ENCODE measurements at regions of chr11 and their contacts with region 1.

Region 1: DNA sequence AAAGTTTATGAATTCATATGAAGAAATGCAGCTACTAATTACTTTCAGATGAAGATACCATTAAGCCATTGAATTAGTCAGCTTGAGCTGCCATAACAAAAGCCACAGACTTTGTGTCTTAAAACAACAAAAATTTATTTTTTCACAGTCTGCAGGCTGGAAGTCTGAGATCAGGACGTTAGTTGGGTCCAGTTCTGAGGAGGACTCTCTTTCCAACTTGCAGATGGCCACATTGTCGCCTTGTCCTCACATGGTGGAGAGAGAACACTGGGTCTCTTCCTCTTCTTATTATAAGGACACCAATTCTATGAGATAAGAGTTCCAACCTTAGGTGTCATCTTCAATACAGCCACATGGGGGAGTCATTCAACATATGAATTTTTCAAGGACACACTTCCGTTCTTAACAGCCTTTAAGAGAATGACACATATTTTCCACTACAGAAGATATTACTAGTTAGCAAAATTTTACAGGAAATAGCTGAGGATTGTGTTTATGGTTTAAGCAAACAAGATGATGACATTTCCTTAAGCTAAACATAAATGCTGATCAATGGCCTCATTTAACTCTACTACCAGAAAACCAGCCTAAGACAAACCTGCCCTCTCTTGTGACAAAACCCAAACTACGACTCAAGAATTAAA is 56.0 kb downstream of the DCUN1D5 start:
- DNase-seq: peak in 6 of 9 experiments; percentile 10 to 80 (median 30)
- ATAC-seq: peak; percentile 93
- H3K4me3 ChIP-seq: no peak overlapping the region
- H3K4me3 Mint-ChIP-seq: no peak overlapping the region
- H3K27ac ChIP-seq: peak overlapping the region in 1 of 2 experiments; percentile 23
- H3K27ac Mint-ChIP-seq: peak overlapping the region; percentile 20
- H3K4me1 ChIP-seq: peaks cover 3% of the 10 kb centered on the region
- H3K4me1 Mint-ChIP-seq: peaks cover 6% of the 10 kb centered on the region
- H3K27me3 ChIP-seq: no peaks in the 10 kb centered on the region
- H3K27me3 Mint-ChIP-seq: no peaks in the 10 kb centered on the region
- CTCF ChIP-seq: peak; percentile 75

Region 2: DNA sequence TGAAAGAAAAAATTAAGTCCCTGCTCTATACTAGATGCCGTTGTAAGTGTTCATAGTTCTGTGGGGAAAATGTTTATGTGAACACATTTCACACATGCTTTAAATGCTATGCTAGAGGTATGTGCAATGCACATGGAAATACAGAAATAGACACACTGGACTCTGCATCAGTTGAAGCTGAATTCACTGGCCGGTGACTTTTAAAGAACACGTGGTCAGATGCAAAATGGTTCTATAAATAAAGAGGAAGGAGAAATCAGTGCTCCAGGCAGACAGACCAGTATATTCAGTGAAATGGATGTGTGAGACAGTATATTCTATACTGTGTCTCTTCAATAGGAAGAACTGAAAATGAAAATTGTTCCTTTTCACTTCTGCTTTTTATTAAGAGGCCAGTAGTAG is 1482.0 kb before region 1 on chr11:
- CTCF ChIA-PET with region 1: no interaction called
- POLR2A ChIA-PET with region 1: no interaction called
- intact Hi-C with region 1: no loop called
- DNase-seq: no peak
- ATAC-seq: no peak
- H3K4me3 ChIP-seq: no peak overlapping the region
- H3K4me3 Mint-ChIP-seq: no peak overlapping the region
- H3K27ac ChIP-seq: no peak overlapping the region
- H3K27ac Mint-ChIP-seq: no peak overlapping the region
- H3K4me1 ChIP-seq: no peaks in the 10 kb centered on the region
- H3K4me1 Mint-ChIP-seq: no peaks in the 10 kb centered on the region
- H3K27me3 ChIP-seq: no peaks in the 10 kb centered on the region
- H3K27me3 Mint-ChIP-seq: no peaks in the 10 kb centered on the region
- CTCF ChIP-seq: no peak

Region 3: GRCh38 chr11:103055221-103055890 is 19.4 kb after region 1 on chr11:
- CTCF ChIA-PET with region 1: interaction called, 5 read pairs
- POLR2A ChIA-PET with region 1: no interaction called
- intact Hi-C with region 1: loop called (anchors 1 to 2 kb)
- DNase-seq: peak in 2 of 9 experiments; percentile 32 to 51
- ATAC-seq: peak; percentile 46
- H3K4me3 ChIP-seq: no peak overlapping the region
- H3K4me3 Mint-ChIP-seq: no peak overlapping the region
- H3K27ac ChIP-seq: no peak overlapping the region
- H3K27ac Mint-ChIP-seq: no peak overlapping the region
- H3K4me1 ChIP-seq: no peaks in the 10 kb centered on the region
- H3K4me1 Mint-ChIP-seq: no peaks in the 10 kb centered on the region
- H3K27me3 ChIP-seq: no peaks in the 10 kb centered on the region
- H3K27me3 Mint-ChIP-seq: no peaks in the 10 kb centered on the region
- CTCF ChIP-seq: peak; percentile 50

Region 4: GRCh38 chr11:103091801-103092524 is 56.0 kb after region 1 on chr11 and contains the start of gene DCUN1D5:
- CTCF ChIA-PET with region 1: interaction called, 3 read pairs
- POLR2A ChIA-PET with region 1: no interaction called
- intact Hi-C with region 1: loop called in 1 of 2 experiments (anchors 5 kb)
- DNase-seq: peak; percentile 88 to 97 (median 95)
- ATAC-seq: peak; percentile 94
- H3K4me3 ChIP-seq: peak within 1 kb of the TSS; percentile 84 to 91
- H3K4me3 Mint-ChIP-seq: peak within 1 kb of the TSS; percentile 84
- H3K27ac ChIP-seq: peak within 1 kb of the TSS; percentile 81 to 86
- H3K27ac Mint-ChIP-seq: peak within 1 kb of the TSS; percentile 95
- H3K4me1 ChIP-seq: peaks cover 25% of the 10 kb centered on the region
- H3K4me1 Mint-ChIP-seq: peaks cover 30% of the 10 kb centered on the region
- H3K27me3 ChIP-seq: peaks cover 0 to 2% of the 10 kb centered on the region in 2 experiments
- H3K27me3 Mint-ChIP-seq: peaks cover 20% of the 10 kb centered on the region
- CTCF ChIP-seq: no peak
- total RNA-seq, gene DCUN1D5: 17.8 to 19.5 TPM

Region 5: DNA sequence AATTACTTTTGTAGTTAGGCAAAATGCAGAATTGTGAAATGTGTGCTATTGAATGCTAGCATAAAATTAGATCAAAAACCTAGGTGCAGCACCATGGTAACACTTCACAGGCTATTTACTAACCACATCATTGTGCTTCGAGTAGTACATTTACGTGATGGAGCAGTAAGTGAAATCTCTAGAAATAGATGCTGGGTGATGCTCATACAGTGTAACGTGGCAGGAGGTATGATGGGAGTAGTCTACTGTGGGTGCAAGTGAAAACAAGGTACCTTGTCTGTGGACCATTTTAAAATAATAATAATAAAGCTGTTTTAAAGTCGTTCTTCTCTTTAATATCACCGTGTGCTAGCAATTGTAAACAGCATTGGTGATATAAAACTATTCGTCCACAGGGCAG is 205.7 kb after region 1 on chr11:
- CTCF ChIA-PET with region 1: no interaction called
- POLR2A ChIA-PET with region 1: no interaction called
- intact Hi-C with region 1: no loop called
- DNase-seq: no peak
- ATAC-seq: no peak
- H3K4me3 ChIP-seq: no peak overlapping the region
- H3K4me3 Mint-ChIP-seq: no peak overlapping the region
- H3K27ac ChIP-seq: no peak overlapping the region
- H3K27ac Mint-ChIP-seq: no peak overlapping the region
- H3K4me1 ChIP-seq: no peaks in the 10 kb centered on the region
- H3K4me1 Mint-ChIP-seq: no peaks in the 10 kb centered on the region
- H3K27me3 ChIP-seq: no peaks in the 10 kb centered on the region
- H3K27me3 Mint-ChIP-seq: no peaks in the 10 kb centered on the region
- CTCF ChIP-seq: no peak

Region 6: DNA sequence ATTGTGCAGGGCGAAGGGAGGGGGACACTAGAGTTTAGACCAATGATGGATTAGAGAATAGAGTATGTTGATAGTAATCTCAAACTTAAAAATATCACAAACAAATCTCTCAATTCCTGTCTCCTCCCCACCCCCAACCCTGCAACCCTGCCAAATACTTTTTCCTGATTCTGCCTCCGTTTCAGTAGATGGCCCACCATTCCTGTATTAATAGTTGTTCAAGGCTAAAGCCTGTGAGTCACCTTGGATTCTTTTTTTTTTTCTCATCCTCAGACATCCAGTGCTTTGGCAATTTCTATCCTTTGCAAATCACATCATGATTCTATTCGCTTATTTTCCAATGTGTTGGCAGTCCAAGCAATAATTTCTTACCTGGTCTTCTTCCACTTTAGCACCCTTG is 281.2 kb after region 1 on chr11:
- CTCF ChIA-PET with region 1: no interaction called
- POLR2A ChIA-PET with region 1: no interaction called
- intact Hi-C with region 1: no loop called
- DNase-seq: no peak
- ATAC-seq: no peak
- H3K4me3 ChIP-seq: no peak overlapping the region
- H3K4me3 Mint-ChIP-seq: no peak overlapping the region
- H3K27ac ChIP-seq: no peak overlapping the region
- H3K27ac Mint-ChIP-seq: no peak overlapping the region
- H3K4me1 ChIP-seq: no peaks in the 10 kb centered on the region
- H3K4me1 Mint-ChIP-seq: no peaks in the 10 kb centered on the region
- H3K27me3 ChIP-seq: no peaks in the 10 kb centered on the region
- H3K27me3 Mint-ChIP-seq: no peaks in the 10 kb centered on the region
- CTCF ChIP-seq: no peak

Measured in CD8-positive, alpha-beta T cell (primary cell).